ENCODE measurements at regions of chr13 and their contacts with region 1.

Region 1: DNA sequence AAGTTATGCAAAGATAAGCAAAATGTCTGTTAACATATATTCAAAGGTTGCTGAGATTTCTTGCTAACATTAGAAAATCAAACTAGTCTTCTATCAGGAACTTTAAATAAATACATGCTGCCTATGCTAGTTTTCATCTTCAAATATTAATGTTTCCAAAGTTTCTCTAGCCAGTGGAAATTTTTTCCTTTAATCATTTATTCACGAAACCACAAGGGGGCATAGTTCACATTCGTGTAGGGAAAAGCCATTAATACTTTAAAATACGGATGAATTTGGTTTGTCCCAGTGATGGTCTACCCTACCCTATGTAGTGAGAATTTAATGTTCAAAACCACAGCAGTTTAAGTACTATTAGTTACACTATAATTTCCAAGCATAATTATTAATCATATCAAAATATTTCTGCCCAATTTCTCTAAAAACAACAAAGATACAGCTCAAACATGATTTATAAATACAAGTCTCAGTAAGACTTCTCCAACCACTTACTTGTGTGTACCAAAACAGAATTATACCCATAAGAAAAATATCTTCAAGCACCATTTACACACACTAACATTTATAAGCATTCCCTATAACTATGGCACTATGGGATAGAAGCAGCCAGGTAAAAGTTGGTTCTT is 16.2 kb downstream of the NUFIP1 start:
- DNase-seq: no peak
- H3K4me3 ChIP-seq: no peak overlapping the region
- H3K27ac ChIP-seq: no peak overlapping the region
- H3K4me1 ChIP-seq: no peaks in the 10 kb centered on the region; a peak in 1 of 7 replicates
- H3K27me3 ChIP-seq: no peaks in the 10 kb centered on the region
- CTCF ChIP-seq: peak in 1 of 3 experiments; percentile 28; a peak in 2 of 4 replicates
- EP300 ChIP-seq: no peak
- POLR2A ChIP-seq: no peak
- RAD21 ChIP-seq: no peak; a peak in 1 of 4 replicates

Region 2: GRCh38 chr13:44955406-44955805 is 17.7 kb before region 1 on chr13:
- CTCF ChIA-PET with region 1: interaction called, 14 read pairs
- POLR2A ChIA-PET with region 1: interaction called, 3 read pairs
- DNase-seq: no peak
- H3K4me3 ChIP-seq: no peak overlapping the region
- H3K27ac ChIP-seq: no peak overlapping the region
- H3K4me1 ChIP-seq: no peaks in the 10 kb centered on the region
- H3K27me3 ChIP-seq: no peaks in the 10 kb centered on the region
- CTCF ChIP-seq: no peak
- EP300 ChIP-seq: no peak
- POLR2A ChIP-seq: no peak
- RAD21 ChIP-seq: no peak

Measured in H1 (cell line).